Heart right ventricle (tissue), 16 donors: ENCODE measurements at regions of chr18 and their contacts with region 1.

Region 1: DNA sequence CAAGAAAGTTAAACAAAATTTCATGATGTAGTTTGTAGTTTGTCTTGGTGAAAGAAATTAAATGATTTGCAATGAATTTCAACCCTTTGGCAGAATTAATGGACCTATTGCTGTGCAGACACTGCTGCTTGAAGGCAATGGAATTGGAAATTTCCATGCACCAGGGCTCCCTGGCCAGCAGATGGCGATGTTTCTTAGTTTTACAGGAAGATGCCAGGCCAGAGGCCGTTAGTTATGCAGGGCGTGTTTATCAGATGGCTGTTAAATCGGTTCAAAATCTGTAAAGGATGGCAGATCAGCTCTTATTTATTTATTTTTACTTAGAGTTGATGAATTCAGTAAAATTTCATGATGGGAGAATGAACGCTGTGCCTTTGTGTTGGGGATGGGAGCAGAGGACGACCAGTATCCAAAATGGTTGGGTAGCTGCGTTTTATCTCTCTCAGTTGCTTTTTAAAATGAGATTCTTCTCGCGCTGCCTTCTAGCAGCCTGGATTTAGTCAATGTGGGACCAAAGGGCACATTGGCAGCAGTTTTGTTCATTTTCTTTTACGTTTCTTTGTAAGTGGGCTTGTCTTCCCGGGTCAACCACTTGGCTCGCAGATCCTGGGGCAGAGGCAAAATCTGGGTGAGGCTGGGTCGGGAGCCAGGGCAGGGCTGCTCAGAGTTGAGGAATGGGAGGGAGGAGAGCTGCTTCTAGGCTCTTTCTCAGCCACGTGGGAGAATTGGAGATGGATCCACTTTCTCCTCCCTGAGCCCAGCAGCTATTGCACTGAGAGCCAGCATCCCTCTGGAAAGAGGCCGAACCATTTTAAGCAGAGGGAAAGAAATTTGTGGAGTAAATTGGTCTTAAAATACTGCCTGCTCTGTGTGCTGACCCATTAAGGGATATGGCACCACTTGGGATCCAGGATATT is 344.0 kb downstream of the PIK3C3 start:
- DNase-seq: peak; percentile 55 to 78
- ATAC-seq: peak; percentile 82 to 93 (median 88)
- H3K4me3 ChIP-seq: peak overlapping the region in 7 of 10 donors; percentile 15 to 40 (median 25)
- H3K27ac ChIP-seq: peak overlapping the region in 5 of 10 donors; percentile 11 to 47 (median 35)
- H3K4me1 ChIP-seq: peaks cover 0 to 4% (median 0%) of the 10 kb centered on the region in 9 donors
- H3K27me3 ChIP-seq: no peaks in the 10 kb centered on the region
- CTCF ChIP-seq: peak; percentile 75 to 95 (median 91)

Region 2: DNA sequence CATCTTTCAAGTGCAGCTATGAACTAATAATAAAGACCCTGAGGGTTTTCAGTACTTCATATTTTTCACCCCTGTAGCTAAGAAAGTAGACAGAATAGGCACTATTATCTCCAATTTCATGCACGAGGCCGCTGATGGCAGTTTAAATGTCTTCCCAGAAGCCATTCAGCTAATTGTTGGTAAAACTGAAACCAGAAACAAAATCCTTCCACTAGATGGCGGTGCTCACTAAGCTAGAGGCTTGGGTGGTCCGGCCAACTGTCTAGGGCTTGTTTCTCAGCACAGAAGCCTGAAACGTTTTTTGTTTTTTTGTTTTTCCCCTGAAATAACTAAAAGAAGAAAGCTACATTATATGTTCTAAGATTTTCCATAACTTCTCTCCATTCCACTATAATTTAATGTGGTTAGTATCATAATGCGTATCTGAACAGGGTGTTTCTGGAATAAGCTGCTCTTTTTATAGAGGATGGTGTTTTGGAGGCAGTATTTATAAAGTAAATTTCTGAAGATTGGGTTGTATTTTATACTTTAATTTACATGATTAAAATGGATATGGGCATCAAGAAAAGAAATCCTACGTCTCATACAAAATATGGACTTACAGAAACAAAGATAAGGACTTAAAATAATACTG is 184.6 kb before region 1 on chr18:
- intact Hi-C with region 1: loop called in 3 of 10 experiments (anchors 10 kb)
- DNase-seq: peak; percentile 11 to 76
- ATAC-seq: peak in 7 of 8 donors; percentile 77 to 90 (median 87)
- H3K4me3 ChIP-seq: no peak overlapping the region
- H3K27ac ChIP-seq: peak overlapping the region in 3 of 10 donors; percentile 5 to 41 (median 24)
- H3K4me1 ChIP-seq: peaks cover 0 to 17% (median 7%) of the 10 kb centered on the region in 9 donors
- H3K27me3 ChIP-seq: no peaks in the 10 kb centered on the region
- CTCF ChIP-seq: peak; percentile 84 to 93 (median 89)

Region 3: DNA sequence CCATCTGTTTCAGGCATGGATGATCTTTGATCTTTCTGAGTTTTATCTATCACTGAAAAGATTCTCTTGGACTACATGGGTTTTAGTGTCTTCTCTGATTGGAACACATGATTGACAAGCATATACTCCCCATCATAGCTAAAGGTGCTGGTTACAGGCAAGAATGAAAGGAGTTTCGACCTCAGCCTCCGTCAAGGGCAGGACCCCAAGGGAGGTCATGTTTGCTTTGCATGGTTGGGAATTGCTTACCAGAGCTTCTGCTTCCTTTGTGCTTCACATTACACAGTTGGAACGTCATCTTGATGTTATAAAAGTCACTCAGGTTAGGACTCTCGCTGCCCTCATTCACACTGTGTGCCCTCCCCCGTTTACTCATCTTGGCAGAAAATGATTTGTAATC is 56.3 kb before region 1 on chr18:
- intact Hi-C with region 1: no loop called
- DNase-seq: no peak
- ATAC-seq: no peak
- H3K4me3 ChIP-seq: no peak overlapping the region
- H3K27ac ChIP-seq: no peak overlapping the region
- H3K4me1 ChIP-seq: no peaks in the 10 kb centered on the region
- H3K27me3 ChIP-seq: no peaks in the 10 kb centered on the region
- CTCF ChIP-seq: no peak

Region 4: DNA sequence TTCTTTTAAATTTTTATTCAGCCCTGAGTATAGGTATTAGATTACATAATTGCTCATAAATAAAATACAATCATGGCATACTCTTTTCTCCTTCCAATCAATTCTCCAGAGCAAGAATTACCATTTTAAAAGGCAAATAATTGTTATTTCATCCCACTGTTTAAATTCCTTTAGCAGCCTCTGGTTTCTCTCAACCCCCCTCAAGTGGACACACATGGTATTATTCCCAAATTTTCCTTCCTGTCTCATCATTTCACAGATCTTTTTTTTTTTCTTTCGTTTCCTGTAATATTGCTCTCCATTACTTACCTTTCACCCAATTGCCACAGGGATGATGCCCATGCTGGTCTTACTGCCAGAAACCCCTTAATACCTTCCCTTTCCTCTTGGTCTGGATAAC is 431.3 kb after region 1 on chr18:
- intact Hi-C with region 1: loop called in 1 of 10 experiments (anchors 5 kb)
- DNase-seq: no peak
- ATAC-seq: no peak
- H3K4me3 ChIP-seq: no peak overlapping the region
- H3K27ac ChIP-seq: no peak overlapping the region
- H3K4me1 ChIP-seq: no peaks in the 10 kb centered on the region
- H3K27me3 ChIP-seq: no peaks in the 10 kb centered on the region
- CTCF ChIP-seq: peak in 6 of 9 donors; percentile 6 to 44 (median 23)

Region 5: GRCh38 chr18:43271593-43272432 is 972.8 kb after region 1 on chr18:
- intact Hi-C with region 1: loop called in 9 of 10 experiments (anchors 5 to 10 kb)
- DNase-seq: peak in 1 of 2 donors; percentile 19
- ATAC-seq: no peak
- H3K4me3 ChIP-seq: no peak overlapping the region
- H3K27ac ChIP-seq: no peak overlapping the region
- H3K4me1 ChIP-seq: no peaks in the 10 kb centered on the region
- H3K27me3 ChIP-seq: peaks cover 0 to 13% (median 5%) of the 10 kb centered on the region in 7 donors
- CTCF ChIP-seq: peak; percentile 63 to 88 (median 80)

Region 6: GRCh38 chr18:43563780-43564179 is 1264.8 kb after region 1 on chr18:
- intact Hi-C with region 1: loop called in 3 of 10 experiments (anchors 10 kb)
- DNase-seq: peak in 1 of 2 donors; percentile 11
- ATAC-seq: peak in 2 of 8 donors; percentile 42 to 70
- H3K4me3 ChIP-seq: no peak overlapping the region
- H3K27ac ChIP-seq: no peak overlapping the region
- H3K4me1 ChIP-seq: peaks cover 0 to 5% (median 0%) of the 10 kb centered on the region in 9 donors
- H3K27me3 ChIP-seq: peaks cover 0 to 16% (median 0%) of the 10 kb centered on the region in 7 donors
- CTCF ChIP-seq: peak in 8 of 9 donors; percentile 25 to 61 (median 48)